Gastrocnemius medialis (tissue), 4 donors: ENCODE measurements at regions of chr20 and their contacts with region 1.

Region 1: DNA sequence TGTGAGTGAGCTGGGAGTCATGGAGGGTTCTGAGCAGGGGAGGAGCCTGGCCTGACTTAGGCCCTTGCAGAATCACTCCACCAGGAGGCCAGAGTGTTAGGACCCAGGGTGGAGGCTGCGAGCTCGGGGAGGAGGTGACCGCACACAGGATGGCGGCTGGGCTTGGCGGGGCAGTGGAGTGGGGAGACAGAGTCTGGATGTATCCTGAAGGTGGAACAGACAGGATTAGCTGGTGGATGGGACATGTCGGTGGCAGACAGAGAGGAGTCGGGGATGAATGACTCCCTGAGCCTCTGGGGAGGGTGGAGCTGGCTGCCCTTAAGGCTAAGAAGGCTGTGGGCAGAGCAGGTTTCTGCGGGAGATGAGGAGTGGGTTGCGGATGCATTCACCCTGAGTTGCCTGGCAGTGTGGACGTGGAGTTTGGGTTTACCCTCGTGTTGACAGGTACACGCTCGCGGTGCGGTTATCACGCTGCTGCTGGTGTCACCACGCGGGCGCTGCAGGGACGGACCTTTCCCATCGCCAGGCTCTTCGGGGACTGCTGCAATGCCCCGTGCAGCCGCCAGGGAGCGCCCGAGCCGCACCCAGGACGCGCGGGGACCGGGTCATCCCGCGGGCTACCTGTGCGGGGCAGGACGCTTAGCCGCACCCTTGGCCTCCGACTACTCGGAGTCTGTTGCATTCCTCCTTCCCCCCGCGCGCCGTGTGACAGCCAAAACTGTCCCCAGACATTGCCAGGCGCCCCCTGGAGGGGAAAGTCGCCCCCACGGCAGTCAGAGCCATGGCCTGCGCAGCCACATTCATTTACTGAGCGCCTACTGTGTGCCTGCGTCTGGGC is 43.0 kb upstream of the PTGIS start:
- DNase-seq: peak; percentile 58 to 82
- ATAC-seq: peak; percentile 31 to 51
- H3K4me3 ChIP-seq: peak overlapping the region in 3 of 4 donors; percentile 30 to 40 (median 37)
- H3K27ac ChIP-seq: peak overlapping the region; percentile 75 to 92 (median 86)
- H3K4me1 ChIP-seq: peaks cover 10 to 14% of the 10 kb centered on the region in 2 donors
- H3K27me3 ChIP-seq: no peaks in the 10 kb centered on the region
- CTCF ChIP-seq: peak; percentile 100
- POLR2A ChIP-seq: no peak

Region 2: DNA sequence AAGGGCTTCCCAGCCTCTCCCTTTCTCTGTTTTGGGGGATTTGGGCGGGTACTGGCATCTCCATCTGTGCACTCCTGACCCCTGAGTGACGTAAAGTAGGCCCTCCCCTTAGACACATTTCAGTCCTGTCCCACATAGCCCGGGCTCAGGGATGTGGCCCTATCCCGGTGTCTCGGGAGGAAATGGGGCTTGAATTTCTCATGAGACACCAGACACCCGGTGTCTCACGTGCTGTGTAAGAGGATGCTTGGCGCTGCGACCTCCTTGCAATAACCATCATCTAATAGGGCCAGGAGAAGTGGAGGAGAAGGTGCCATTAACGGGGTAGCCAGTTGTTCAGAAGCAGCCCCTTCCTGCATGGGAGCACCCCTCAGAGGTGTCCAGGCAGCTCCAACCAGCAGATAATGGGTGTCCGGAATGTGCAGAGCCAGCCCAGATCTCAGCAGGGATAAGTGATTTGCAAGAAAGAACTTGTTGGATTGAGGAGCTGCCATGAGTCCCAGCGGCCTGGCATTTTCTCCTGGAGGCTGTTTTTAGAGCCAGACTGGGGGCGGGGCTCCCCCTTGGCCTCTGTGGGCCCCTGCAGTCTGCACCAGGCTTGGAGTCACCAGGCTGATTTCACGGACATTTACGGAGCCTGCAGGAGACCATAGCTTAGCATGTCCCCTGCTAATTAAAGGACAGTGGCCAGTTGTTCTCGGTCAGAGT is 1155.1 kb before region 1 on chr20:
- in situ Hi-C with region 1: no loop called
- intact Hi-C with region 1: no loop called
- DNase-seq: no peak
- ATAC-seq: no peak
- H3K4me3 ChIP-seq: no peak overlapping the region
- H3K27ac ChIP-seq: no peak overlapping the region
- H3K4me1 ChIP-seq: no peaks in the 10 kb centered on the region
- H3K27me3 ChIP-seq: peaks cover 0 to 9% (median 7%) of the 10 kb centered on the region in 3 donors
- CTCF ChIP-seq: no peak
- POLR2A ChIP-seq: no peak

Region 3: DNA sequence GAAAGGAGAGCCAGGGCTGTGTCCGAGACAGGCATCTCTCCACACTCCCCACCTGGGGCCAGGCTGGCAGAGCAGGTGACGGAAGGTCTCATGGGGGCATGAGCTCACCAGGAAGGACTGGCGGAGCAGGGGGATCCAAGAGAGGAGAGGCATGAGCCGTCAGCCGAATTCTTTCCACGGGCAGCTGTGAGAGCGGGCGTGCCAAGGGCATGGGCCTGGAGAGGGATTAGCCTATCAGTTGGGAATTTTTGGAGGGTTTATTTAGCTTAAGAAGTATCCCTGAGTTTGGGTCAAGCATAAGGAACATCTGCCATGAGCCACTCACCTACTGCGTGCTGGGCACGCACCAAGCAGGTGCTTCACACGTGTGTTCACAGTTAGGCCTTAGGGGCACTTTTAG is 272.9 kb before region 1 on chr20:
- in situ Hi-C with region 1: loop called in 3 of 4 experiments (anchors 5 to 10 kb)
- intact Hi-C with region 1: loop called (anchors 2 kb)
- DNase-seq: no peak
- ATAC-seq: no peak
- H3K4me3 ChIP-seq: no peak overlapping the region
- H3K27ac ChIP-seq: peak overlapping the region in 3 of 4 donors; percentile 29 to 68 (median 63)
- H3K4me1 ChIP-seq: peaks cover 10 to 24% of the 10 kb centered on the region in 2 donors
- H3K27me3 ChIP-seq: no peaks in the 10 kb centered on the region
- CTCF ChIP-seq: no peak
- POLR2A ChIP-seq: no peak

Region 4: GRCh38 chr20:49713753-49714712 is 103.1 kb after region 1 on chr20 and contains the start of gene B4GALT5:
- in situ Hi-C with region 1: no loop called
- intact Hi-C with region 1: loop called (anchors 2 kb)
- DNase-seq: peak; percentile 27 to 56
- ATAC-seq: peak; percentile 67 to 72
- H3K4me3 ChIP-seq: peak within 1 kb of the TSS; percentile 89 to 98 (median 92)
- H3K27ac ChIP-seq: peak within 1 kb of the TSS; percentile 95 to 99 (median 98)
- H3K4me1 ChIP-seq: peaks cover 44 to 59% of the 10 kb centered on the region in 2 donors
- H3K27me3 ChIP-seq: no peaks in the 10 kb centered on the region
- CTCF ChIP-seq: no peak
- POLR2A ChIP-seq: peak; percentile 69 to 78
- total RNA-seq, gene B4GALT5: 27.6 to 75.2 (median 56.4) TPM

Region 5: GRCh38 chr20:49821870-49822331 is 211.0 kb after region 1 on chr20:
- in situ Hi-C with region 1: no loop called
- intact Hi-C with region 1: loop called (anchors 5 kb)
- DNase-seq: peak in 1 of 2 donors; percentile 35
- ATAC-seq: peak; percentile 59 to 62
- H3K4me3 ChIP-seq: no peak overlapping the region
- H3K27ac ChIP-seq: peak overlapping the region; percentile 81 to 89 (median 88)
- H3K4me1 ChIP-seq: peaks cover 26 to 51% of the 10 kb centered on the region in 2 donors
- H3K27me3 ChIP-seq: no peaks in the 10 kb centered on the region
- CTCF ChIP-seq: peak in 2 of 5 experiments; percentile 23 to 29
- POLR2A ChIP-seq: no peak

Region 6: GRCh38 chr20:49888345-49888966 is 277.5 kb after region 1 on chr20:
- in situ Hi-C with region 1: no loop called
- intact Hi-C with region 1: loop called (anchors 1 kb)
- DNase-seq: peak in 1 of 2 donors; percentile 56
- ATAC-seq: peak; percentile 37 to 67
- H3K4me3 ChIP-seq: no peak overlapping the region
- H3K27ac ChIP-seq: peak overlapping the region; percentile 49 to 72 (median 67)
- H3K4me1 ChIP-seq: peaks cover 24 to 26% of the 10 kb centered on the region in 2 donors
- H3K27me3 ChIP-seq: no peaks in the 10 kb centered on the region
- CTCF ChIP-seq: peak; percentile 66 to 82 (median 76)
- POLR2A ChIP-seq: no peak